Calu3 (cell line): ENCODE measurements at regions of chr1 and their contacts with region 1.

Region 1: GRCh38 chr1:91165033-91165654 is 143.3 kb upstream of the ZNF644 start:
- DNase-seq: peak; percentile 89
- H3K4me3 Mint-ChIP-seq: no peak overlapping the region
- H3K27ac Mint-ChIP-seq: peak overlapping the region; percentile 13
- H3K4me1 Mint-ChIP-seq: peaks cover 15% of the 10 kb centered on the region
- H3K27me3 Mint-ChIP-seq: no peaks in the 10 kb centered on the region
- CTCF ChIP-seq: peak; percentile 91

Region 2: DNA sequence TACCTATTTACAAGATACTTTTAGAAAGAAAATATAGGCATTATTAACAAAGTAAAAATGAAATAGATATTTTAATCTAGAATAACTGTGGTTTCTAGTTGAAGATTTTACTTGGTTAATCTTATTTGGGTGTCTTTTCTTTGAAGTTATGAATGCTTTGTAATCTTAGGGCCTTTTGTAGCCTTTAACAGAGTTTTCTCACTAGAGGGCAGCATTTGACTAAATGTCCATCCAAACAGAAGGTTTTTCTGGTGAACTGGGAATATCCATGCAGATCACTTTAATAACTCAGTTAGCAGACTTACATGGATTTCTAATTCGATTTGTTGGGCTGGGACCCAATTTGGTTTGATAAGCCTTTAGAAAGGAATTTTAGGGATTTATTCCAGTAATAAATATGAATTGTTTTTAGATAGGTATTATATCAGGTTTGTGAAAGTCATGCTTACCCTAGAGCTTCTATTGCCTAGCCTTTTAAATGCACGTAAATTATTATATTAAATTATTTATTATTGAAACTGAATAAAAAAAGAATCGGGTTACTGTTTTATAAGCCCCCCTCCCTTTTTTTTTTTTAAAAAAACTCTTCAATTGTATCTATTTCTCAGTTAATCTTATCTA is 1050.5 kb before region 1 on chr1:
- CTCF ChIA-PET with region 1: no interaction called
- intact Hi-C with region 1: loop called (anchors 5 kb)
- DNase-seq: peak; percentile 17
- H3K4me3 Mint-ChIP-seq: no peak overlapping the region
- H3K27ac Mint-ChIP-seq: no peak overlapping the region
- H3K4me1 Mint-ChIP-seq: no peaks in the 10 kb centered on the region
- H3K27me3 Mint-ChIP-seq: peaks cover 29% of the 10 kb centered on the region
- CTCF ChIP-seq: no peak

Region 3: GRCh38 chr1:90964444-90965035 is 200.6 kb before region 1 on chr1:
- CTCF ChIA-PET with region 1: interaction called, 8 read pairs
- intact Hi-C with region 1: loop called (anchors 10 kb)
- DNase-seq: no peak
- H3K4me3 Mint-ChIP-seq: no peak overlapping the region
- H3K27ac Mint-ChIP-seq: no peak overlapping the region
- H3K4me1 Mint-ChIP-seq: peaks cover 42% of the 10 kb centered on the region
- H3K27me3 Mint-ChIP-seq: no peaks in the 10 kb centered on the region
- CTCF ChIP-seq: peak; percentile 26

Region 4: GRCh38 chr1:91226471-91227120 is 61.5 kb after region 1 on chr1:
- CTCF ChIA-PET with region 1: no interaction called
- intact Hi-C with region 1: no loop called
- DNase-seq: no peak
- H3K4me3 Mint-ChIP-seq: no peak overlapping the region
- H3K27ac Mint-ChIP-seq: no peak overlapping the region
- H3K4me1 Mint-ChIP-seq: no peaks in the 10 kb centered on the region
- H3K27me3 Mint-ChIP-seq: no peaks in the 10 kb centered on the region
- CTCF ChIP-seq: no peak

Region 5: GRCh38 chr1:91282695-91283420 is 117.7 kb after region 1 on chr1:
- CTCF ChIA-PET with region 1: interaction called, 13 read pairs
- intact Hi-C with region 1: loop called (anchors 1 kb)
- DNase-seq: peak; percentile 66
- H3K4me3 Mint-ChIP-seq: no peak overlapping the region
- H3K27ac Mint-ChIP-seq: no peak overlapping the region
- H3K4me1 Mint-ChIP-seq: no peaks in the 10 kb centered on the region
- H3K27me3 Mint-ChIP-seq: peaks cover 27% of the 10 kb centered on the region
- CTCF ChIP-seq: peak; percentile 58

Region 6: DNA sequence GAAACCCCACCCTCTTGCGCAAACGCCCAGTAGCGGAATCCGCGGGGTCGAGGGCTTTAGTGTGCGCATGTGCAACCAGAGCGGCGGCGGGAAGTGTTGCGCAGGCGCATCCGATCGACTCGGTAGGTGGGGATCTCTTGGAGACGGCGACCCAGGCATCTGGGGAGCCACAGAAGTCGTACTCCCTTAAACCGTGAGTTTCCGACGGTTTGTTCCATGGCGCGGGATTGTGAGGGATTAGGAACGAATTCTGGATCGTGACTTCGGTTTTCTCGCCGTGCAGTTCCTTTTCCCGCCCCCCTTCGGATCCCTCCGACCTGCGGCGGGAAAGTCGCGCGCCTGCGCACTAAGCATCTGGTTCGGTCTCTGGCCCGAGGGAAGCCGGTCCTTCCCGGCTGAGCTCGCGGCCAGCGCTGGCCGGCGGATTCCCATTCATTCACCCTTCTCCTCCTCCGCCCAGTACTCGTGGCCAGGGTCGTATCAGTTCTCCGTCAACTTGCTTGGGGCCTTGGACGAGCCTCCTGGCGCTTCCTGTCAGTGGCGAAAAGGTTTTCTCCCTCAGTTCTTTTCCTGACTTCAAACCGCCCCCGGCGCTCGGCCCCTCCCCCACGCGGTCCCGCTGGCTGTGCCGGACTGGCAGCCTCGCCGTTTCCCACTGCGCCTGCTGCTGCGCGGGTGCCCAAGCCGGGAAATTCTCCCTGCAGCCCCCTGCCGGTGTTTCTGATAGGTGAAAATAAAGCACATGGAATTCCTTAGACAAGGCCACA is 335.8 kb after region 1 on chr1 and contains the start of gene CDC7:
- CTCF ChIA-PET with region 1: no interaction called
- intact Hi-C with region 1: loop called (anchors 5 kb)
- DNase-seq: peak; percentile 95
- H3K4me3 Mint-ChIP-seq: no peak within 1 kb of the TSS
- H3K27ac Mint-ChIP-seq: no peak within 1 kb of the TSS
- H3K4me1 Mint-ChIP-seq: peaks cover 18% of the 10 kb centered on the region
- H3K27me3 Mint-ChIP-seq: no peaks in the 10 kb centered on the region
- CTCF ChIP-seq: peak; percentile 61
- total RNA-seq, gene CDC7: 15.6 and 16.0 TPM in 2 replicates